ENCODE measurements at regions of chr10 and their contacts with region 1.

Region 1: DNA sequence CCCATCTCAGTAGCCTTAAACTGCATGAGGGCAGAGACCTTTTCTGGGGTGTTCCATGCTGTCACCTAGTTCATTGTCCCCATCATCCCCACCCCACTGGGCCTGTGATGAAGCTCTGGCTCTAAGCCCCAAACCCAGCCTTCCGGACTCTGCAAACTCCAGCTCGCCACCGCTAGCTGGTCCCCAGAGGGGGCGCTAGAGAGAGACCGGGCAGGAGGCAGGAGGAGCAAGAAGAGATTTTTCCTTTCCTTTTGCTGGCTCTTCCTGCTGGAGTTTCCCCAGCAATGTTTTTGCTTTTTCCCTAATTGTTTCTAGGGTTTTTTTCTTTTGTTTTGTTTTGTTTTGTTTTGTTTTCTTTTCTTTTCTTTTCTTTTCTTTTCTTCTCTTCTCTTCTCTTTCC is 234.4 kb downstream of the TEX36 start:
- DNase-seq: no peak
- H3K4me3 ChIP-seq: no peak overlapping the region
- H3K27ac ChIP-seq: no peak overlapping the region
- H3K4me1 ChIP-seq: no peaks in the 10 kb centered on the region
- H3K27me3 ChIP-seq: no peaks in the 10 kb centered on the region
- CTCF ChIP-seq: no peak
- POLR2A ChIP-seq: no peak

Region 2: DNA sequence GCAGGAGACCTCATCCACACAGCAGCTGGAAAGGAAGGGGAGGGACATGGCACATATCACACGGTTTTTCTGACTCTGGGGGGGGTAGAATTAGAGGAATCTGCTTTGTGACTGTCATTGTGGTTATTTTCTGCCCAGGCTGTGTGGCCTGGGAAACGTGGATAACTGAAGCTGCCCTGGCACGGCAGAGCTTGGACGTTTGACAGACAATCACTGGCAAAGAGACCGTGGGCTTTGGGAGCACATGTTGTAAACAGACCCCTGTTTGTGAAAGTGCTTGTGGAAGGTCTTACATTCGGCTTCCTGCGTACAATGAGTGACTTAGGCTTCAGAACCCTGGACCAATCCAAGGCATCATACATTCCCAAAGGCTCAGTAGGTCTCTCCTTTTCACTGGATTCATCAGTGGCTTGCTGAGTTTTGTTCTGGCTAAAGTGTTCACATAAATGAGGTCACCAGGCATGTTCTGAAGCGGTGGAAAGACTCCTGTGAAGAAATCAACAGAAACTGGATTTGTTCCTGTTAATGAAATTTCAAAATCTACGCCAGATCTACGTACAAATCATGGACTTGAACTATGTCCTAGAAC is 46.1 kb after region 1 on chr10:
- intact Hi-C with region 1: no loop called
- DNase-seq: no peak
- H3K4me3 ChIP-seq: no peak overlapping the region
- H3K27ac ChIP-seq: no peak overlapping the region
- H3K4me1 ChIP-seq: no peaks in the 10 kb centered on the region
- H3K27me3 ChIP-seq: no peaks in the 10 kb centered on the region
- CTCF ChIP-seq: no peak
- POLR2A ChIP-seq: no peak

Region 3: GRCh38 chr10:125514206-125515186 is 65.9 kb after region 1 on chr10:
- intact Hi-C with region 1: loop called (anchors 5 kb)
- DNase-seq: no peak
- H3K4me3 ChIP-seq: no peak overlapping the region
- H3K27ac ChIP-seq: no peak overlapping the region
- H3K4me1 ChIP-seq: no peaks in the 10 kb centered on the region
- H3K27me3 ChIP-seq: no peaks in the 10 kb centered on the region
- CTCF ChIP-seq: no peak
- POLR2A ChIP-seq: no peak

Region 4: DNA sequence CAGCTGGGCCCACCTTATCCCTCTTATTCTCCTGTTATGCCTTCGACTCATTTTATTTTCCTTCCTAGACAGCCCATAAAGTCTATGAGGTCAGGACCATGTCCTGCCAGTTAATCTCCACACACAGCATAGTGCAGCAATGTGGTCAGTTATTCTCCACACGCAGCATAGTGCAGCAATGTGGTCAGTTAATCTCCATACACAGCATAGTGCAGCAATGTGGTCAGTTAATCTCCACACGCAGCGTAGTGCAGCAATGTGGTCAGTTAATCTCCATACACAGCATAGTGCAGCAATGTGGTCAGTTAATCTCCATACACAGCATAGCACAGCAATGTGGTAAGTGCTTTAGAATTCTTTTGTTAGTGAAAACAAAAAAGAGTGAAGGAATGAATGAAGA is 156.6 kb after region 1 on chr10:
- intact Hi-C with region 1: loop called (anchors 10 kb)
- DNase-seq: no peak
- H3K4me3 ChIP-seq: no peak overlapping the region
- H3K27ac ChIP-seq: no peak overlapping the region
- H3K4me1 ChIP-seq: no peaks in the 10 kb centered on the region
- H3K27me3 ChIP-seq: no peaks in the 10 kb centered on the region
- CTCF ChIP-seq: no peak
- POLR2A ChIP-seq: no peak

Region 5: DNA sequence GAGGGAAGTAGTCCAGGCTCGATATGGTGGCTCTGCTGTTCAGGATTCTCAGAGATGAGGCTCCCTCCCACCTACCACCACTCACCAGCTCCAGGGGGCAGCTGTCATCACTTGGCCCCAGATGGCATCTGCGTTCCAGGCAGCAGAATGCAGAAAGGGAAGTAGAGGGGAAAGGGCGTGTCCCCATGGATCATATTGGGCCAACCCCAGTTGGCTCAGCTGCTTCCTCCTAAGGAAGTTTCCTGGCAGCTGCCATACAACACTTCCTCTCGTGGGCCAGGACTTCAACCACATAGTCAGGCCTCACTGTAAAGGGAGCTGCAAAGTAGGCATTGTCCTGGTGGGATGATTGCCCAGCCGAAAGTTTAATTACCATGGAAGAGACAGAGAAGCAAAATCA is 236.0 kb after region 1 on chr10:
- intact Hi-C with region 1: loop called (anchors 10 kb)
- DNase-seq: no peak
- H3K4me3 ChIP-seq: no peak overlapping the region
- H3K27ac ChIP-seq: no peak overlapping the region
- H3K4me1 ChIP-seq: peaks cover 6% of the 10 kb centered on the region
- H3K27me3 ChIP-seq: peaks cover 7% of the 10 kb centered on the region
- CTCF ChIP-seq: no peak
- POLR2A ChIP-seq: no peak

Measured in prostate gland (tissue), 2 donors.